ENCODE measurements at regions of chr20 and their contacts with region 1.

Region 1: DNA sequence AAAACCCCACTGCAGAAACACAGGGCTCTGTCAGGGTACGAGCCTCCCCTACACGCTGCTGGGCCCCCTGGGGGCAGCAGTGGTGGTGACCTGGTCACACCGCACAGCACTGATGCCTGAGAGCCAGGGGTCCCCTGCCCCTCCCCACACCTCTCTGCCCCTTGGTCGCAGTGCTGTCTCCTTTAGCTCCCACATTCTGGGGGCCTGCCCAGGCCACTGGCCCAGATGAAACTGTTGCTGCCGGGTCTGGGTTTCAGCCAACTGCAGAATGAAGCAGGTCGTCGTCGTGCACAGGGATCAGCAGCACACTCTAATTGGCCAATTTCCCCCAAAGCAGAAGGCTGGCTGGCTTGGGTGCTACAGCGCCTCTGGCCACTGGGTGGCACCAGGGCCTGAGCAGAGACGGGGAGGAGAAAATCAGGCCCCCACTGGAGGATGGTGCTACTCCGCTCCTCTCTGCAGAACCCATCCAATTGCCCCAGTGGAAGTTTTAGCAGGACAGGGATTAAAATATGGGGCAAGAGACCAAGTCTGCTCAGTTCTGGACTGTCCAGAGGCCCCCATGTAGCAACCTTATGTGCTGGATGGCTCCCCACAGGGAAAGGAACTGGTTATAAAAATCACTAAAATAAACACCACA is 26.1 kb downstream of the DIDO1 start:
- DNase-seq: peak; percentile 73
- H3K4me3 ChIP-seq: no peak overlapping the region
- H3K27ac ChIP-seq: no peak overlapping the region
- H3K4me1 ChIP-seq: no peaks in the 10 kb centered on the region
- H3K27me3 ChIP-seq: no peaks in the 10 kb centered on the region
- CTCF ChIP-seq: peak; percentile 78 to 95
- POLR2A ChIP-seq: no peak

Region 2: GRCh38 chr20:62914970-62915457 is 14.8 kb after region 1 on chr20:
- CTCF ChIA-PET with region 1: interaction called, 21 read pairs
- POLR2A ChIA-PET with region 1: no interaction called
- dilution Hi-C with region 1: no loop called
- intact Hi-C with region 1: no loop called
- DNase-seq: peak; percentile 58
- H3K4me3 ChIP-seq: no peak overlapping the region
- H3K27ac ChIP-seq: peak overlapping the region; percentile 18
- H3K4me1 ChIP-seq: no peaks in the 10 kb centered on the region
- H3K27me3 ChIP-seq: no peaks in the 10 kb centered on the region
- CTCF ChIP-seq: no peak
- POLR2A ChIP-seq: no peak

Measured in endothelial cell of umbilical vein (primary cell).